Activated CD8-positive, alpha-beta memory T cell treated with anti-CD3 and anti-CD28 coated beads, Interleukin-2, amount 10 ng/mL, durations not matched to agents 7 days and 5 days (primary cell): ENCODE measurements at regions of chr11 and their contacts with region 1.

Region 1: GRCh38 chr11:118240999-118241768 is 11.0 kb downstream of the MPZL3 start:
- DNase-seq: peak; percentile 88
- ATAC-seq: peak; percentile 89
- H3K4me3 Mint-ChIP-seq: peak overlapping the region; percentile 71
- H3K27ac Mint-ChIP-seq: peak overlapping the region; percentile 97
- H3K4me1 Mint-ChIP-seq: peaks cover 91% of the 10 kb centered on the region
- H3K27me3 Mint-ChIP-seq: no peaks in the 10 kb centered on the region

Region 2: DNA sequence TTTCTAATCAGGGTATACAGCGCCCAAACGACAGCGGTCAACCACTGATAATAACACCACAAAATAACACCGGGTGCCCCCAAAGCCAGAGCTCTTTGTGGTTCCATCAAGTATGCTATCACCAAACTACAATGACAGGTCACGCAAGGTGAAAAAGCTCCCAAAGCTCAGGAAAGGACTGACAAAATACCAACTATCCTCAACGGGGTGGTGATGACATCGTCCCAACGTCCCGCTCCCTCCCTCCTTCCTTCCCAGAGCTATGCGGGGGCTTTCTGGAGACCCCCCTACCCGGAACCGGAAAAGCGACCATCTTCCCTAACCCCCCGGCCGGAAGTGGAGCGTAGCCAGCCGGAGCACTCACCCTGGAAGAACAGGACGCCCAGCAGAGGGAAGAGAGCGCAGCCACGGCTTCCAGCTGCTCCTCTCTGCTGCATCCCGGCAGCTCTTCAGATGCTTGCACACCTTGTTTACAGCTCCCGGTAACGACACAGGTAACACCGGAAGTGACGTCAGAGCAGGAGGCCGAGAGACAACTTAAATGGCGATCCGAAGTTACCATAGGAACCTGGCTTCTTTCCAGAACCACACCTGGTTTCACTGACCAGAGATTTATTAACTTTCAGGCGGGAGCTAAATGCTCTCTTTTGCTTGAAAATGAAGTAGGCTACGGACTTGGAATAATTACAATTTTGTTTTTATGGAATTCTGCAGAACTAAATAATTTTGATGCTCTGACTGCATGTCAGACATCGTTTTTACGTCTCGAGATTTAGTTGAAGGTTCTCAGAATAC is 10.9 kb after region 1 on chr11 and contains the start of gene MPZL3:
- CTCF ChIA-PET with region 1: interaction called, 25 read pairs
- DNase-seq: peak; percentile 90
- ATAC-seq: peak; percentile 65
- H3K4me3 Mint-ChIP-seq: peak within 1 kb of the TSS; percentile 90
- H3K27ac Mint-ChIP-seq: peak within 1 kb of the TSS; percentile 99
- H3K4me1 Mint-ChIP-seq: peaks cover 41% of the 10 kb centered on the region
- H3K27me3 Mint-ChIP-seq: no peaks in the 10 kb centered on the region
- total RNA-seq, gene MPZL3: 20.4 to 28.4 TPM

Region 3: GRCh38 chr11:118417801-118418200 is 176.6 kb after region 1 on chr11:
- CTCF ChIA-PET with region 1: no interaction called
- DNase-seq: no peak
- ATAC-seq: no peak
- H3K4me3 Mint-ChIP-seq: no peak overlapping the region
- H3K27ac Mint-ChIP-seq: no peak overlapping the region
- H3K4me1 Mint-ChIP-seq: no peaks in the 10 kb centered on the region
- H3K27me3 Mint-ChIP-seq: no peaks in the 10 kb centered on the region